ENCODE measurements at regions of chr5 and their contacts with region 1.

Region 1: GRCh38 chr5:79514391-79515105 is 614 bp upstream of the HOMER1 start:
- DNase-seq: peak; percentile 98
- ATAC-seq: peak; percentile 79
- H3K4me3 ChIP-seq: peak overlapping the region; percentile 32 to 85 (median 76)
- H3K4me3 Mint-ChIP-seq: peak overlapping the region; percentile 100
- H3K27ac ChIP-seq: peak overlapping the region; percentile 89 to 94
- H3K27ac Mint-ChIP-seq: peak overlapping the region; percentile 100
- H3K4me1 ChIP-seq: peaks cover 26 to 29% of the 10 kb centered on the region in 2 donors
- H3K4me1 Mint-ChIP-seq: peaks cover 36% of the 10 kb centered on the region
- H3K27me3 ChIP-seq: peaks cover 5 to 31% (median 28%) of the 10 kb centered on the region in 4 experiments
- H3K27me3 Mint-ChIP-seq: peaks cover 29% of the 10 kb centered on the region
- CTCF ChIP-seq: no peak

Region 2: GRCh38 chr5:79990598-79991507 is 476.3 kb after region 1 on chr5 and contains the start of gene MTX3:
- CTCF ChIA-PET with region 1: no interaction called
- POLR2A ChIA-PET with region 1: no interaction called
- intact Hi-C with region 1: loop called (anchors 5 kb)
- DNase-seq: peak; percentile 89
- ATAC-seq: peak; percentile 96
- H3K4me3 ChIP-seq: peak within 1 kb of the TSS; percentile 71 to 90 (median 78)
- H3K4me3 Mint-ChIP-seq: peak within 1 kb of the TSS; percentile 81
- H3K27ac ChIP-seq: peak within 1 kb of the TSS; percentile 65 to 70
- H3K27ac Mint-ChIP-seq: peak within 1 kb of the TSS; percentile 91
- H3K4me1 ChIP-seq: peaks cover 16% of the 10 kb centered on the region in 2 donors
- H3K4me1 Mint-ChIP-seq: peaks cover 17% of the 10 kb centered on the region
- H3K27me3 ChIP-seq: no peaks in the 10 kb centered on the region
- H3K27me3 Mint-ChIP-seq: peaks cover 9% of the 10 kb centered on the region
- CTCF ChIP-seq: no peak
- total RNA-seq, gene MTX3: 21.0 and 22.0 TPM in 2 replicates